Ascending aorta (tissue), 2 donors: ENCODE measurements at regions of chr5 and their contacts with region 1.

Region 1: GRCh38 chr5:178551059-178551458 is 39.1 kb downstream of the COL23A1 start:
- DNase-seq: no peak
- H3K4me3 ChIP-seq: no peak overlapping the region
- H3K27ac ChIP-seq: no peak overlapping the region
- H3K4me1 ChIP-seq: no peaks in the 10 kb centered on the region
- H3K27me3 ChIP-seq: no peaks in the 10 kb centered on the region
- CTCF ChIP-seq: peak in 2 of 3 experiments; percentile 39 to 50

Region 2: DNA sequence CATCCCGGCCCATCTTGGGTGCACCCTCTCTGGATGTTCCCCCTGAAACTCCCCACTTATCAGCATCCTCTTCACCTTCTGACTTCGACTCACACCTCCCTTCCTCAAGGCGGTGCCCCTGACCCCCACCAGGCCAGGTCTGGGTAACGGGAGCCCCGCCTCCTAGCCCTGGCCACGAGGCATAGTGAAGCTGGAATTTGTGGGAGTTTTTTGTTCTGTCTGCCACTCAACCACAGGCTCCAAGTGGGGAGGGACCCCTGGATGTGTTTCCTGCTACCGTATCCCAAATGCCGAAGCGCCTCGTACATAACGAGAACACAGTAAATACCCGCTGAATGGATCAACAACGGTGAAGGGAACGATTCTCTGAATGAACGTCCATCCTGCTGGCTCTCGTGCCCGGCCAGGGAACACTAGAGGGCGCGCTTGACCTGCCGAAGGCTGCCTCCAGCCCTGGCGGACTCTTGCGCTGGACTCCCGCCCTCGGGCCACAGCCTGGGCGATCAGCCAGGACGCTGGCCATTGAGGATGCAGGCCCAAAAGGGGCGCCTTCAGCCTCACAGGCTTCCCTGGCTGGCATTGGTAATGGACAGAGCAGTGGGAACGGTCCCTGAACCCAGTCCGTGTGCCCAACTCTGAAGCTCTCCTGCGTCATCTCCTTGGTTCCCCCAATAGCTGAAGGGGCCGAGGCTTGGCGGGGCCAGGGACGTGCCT is 271.2 kb before region 1 on chr5:
- intact Hi-C with region 1: loop called (anchors 5 kb)
- DNase-seq: peak in 1 of 2 donors; percentile 88
- H3K4me3 ChIP-seq: no peak overlapping the region
- H3K27ac ChIP-seq: no peak overlapping the region
- H3K4me1 ChIP-seq: no peaks in the 10 kb centered on the region
- H3K27me3 ChIP-seq: no peaks in the 10 kb centered on the region
- CTCF ChIP-seq: peak; percentile 80 to 95 (median 90)

Region 3: GRCh38 chr5:178467568-178468195 is 83.4 kb before region 1 on chr5:
- intact Hi-C with region 1: loop called (anchors 5 kb)
- DNase-seq: peak in 1 of 2 donors; percentile 82
- H3K4me3 ChIP-seq: peak overlapping the region in 1 of 2 donors; percentile 18
- H3K27ac ChIP-seq: peak overlapping the region; percentile 48 to 59
- H3K4me1 ChIP-seq: peaks cover 0 to 11% of the 10 kb centered on the region in 2 donors
- H3K27me3 ChIP-seq: no peaks in the 10 kb centered on the region
- CTCF ChIP-seq: no peak

Region 4: GRCh38 chr5:178505639-178506407 is 45.2 kb before region 1 on chr5:
- intact Hi-C with region 1: no loop called
- DNase-seq: no peak
- H3K4me3 ChIP-seq: no peak overlapping the region
- H3K27ac ChIP-seq: no peak overlapping the region
- H3K4me1 ChIP-seq: no peaks in the 10 kb centered on the region
- H3K27me3 ChIP-seq: no peaks in the 10 kb centered on the region
- CTCF ChIP-seq: no peak